AG04450 (cell line): ENCODE measurements at regions of chr15 and their contacts with region 1.

Region 1: GRCh38 chr15:34101366-34102175 is at the starts of genes EMC7 and PGBD4:
- DNase-seq: peak; percentile 99
- H3K4me3 ChIP-seq: peak within 1 kb of the TSS; percentile 99
- H3K27ac ChIP-seq: peak within 1 kb of the TSS; percentile 96
- H3K27me3 ChIP-seq: no peaks in the 10 kb centered on the region
- CTCF ChIP-seq: no peak
- polyA plus RNA-seq, gene EMC7: 86.9 and 116 TPM in 2 replicates
- polyA plus RNA-seq, gene PGBD4: 1.6 and 2.2 TPM in 2 replicates

Region 2: GRCh38 chr15:34065941-34066340 is 35.6 kb before region 1 on chr15:
- CTCF ChIA-PET with region 1: interaction called, 11 read pairs
- POLR2A ChIA-PET with region 1: no interaction called
- DNase-seq: no peak
- H3K4me3 ChIP-seq: no peak overlapping the region
- H3K27ac ChIP-seq: no peak overlapping the region
- H3K27me3 ChIP-seq: no peaks in the 10 kb centered on the region
- CTCF ChIP-seq: no peak

Region 3: GRCh38 chr15:34258151-34258550 is 156.6 kb after region 1 on chr15:
- CTCF ChIA-PET with region 1: no interaction called
- POLR2A ChIA-PET with region 1: no interaction called
- DNase-seq: no peak
- H3K4me3 ChIP-seq: no peak overlapping the region
- H3K27ac ChIP-seq: no peak overlapping the region
- H3K27me3 ChIP-seq: no peaks in the 10 kb centered on the region
- CTCF ChIP-seq: no peak